HepG2 (cell line): ENCODE measurements at regions of chr9 and their contacts with region 1.

Region 1: DNA sequence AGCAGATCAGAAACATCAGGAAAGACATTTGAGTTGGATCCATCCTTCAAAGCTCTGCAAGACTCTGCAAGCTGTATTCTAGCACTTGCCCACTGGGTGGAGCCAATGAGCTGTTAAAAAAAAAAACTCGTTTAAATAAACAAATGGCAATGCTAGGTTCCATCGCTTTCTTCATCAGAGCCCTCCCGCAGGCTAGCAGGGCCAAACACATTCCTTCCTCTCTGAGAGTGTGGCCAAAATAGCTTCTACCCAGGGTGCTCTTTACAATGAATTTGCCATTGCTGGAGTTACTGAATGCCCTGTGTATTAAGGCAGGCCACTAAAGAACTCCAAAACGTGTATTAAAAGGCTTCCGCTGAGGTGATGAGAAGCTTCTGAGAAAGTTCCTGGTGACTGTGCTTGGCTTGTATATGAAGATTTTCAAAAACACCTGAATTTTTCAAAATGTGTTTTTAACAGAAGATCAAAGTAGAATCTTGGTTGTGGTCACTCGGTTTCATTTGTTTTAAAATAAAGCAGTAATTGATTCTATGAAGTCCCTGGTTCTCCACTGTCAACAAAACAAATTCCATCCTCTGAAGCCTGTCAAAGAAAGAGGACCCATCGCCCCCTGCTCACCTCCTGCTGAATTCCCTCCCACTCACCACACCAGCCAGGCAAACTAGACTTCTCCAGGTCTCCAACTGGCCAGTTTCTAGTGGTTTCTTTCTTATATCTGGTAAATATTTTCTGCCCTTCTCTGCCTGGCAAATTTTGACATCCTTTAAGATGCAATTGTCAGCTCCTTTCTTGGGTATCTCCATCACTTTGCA is 36.5 kb upstream of the EQTN start:
- DNase-seq: peak; percentile 57
- ATAC-seq: peak; percentile 87
- H3K4me3 ChIP-seq: no peak overlapping the region
- H3K27ac ChIP-seq: no peak overlapping the region
- H3K4me1 ChIP-seq: no peaks in the 10 kb centered on the region
- H3K27me3 ChIP-seq: peaks cover 0 to 15% of the 10 kb centered on the region in 2 experiments; a peak in 2 of 5 replicates
- CTCF ChIP-seq: peak; percentile 77
- EP300 ChIP-seq: no peak
- POLR2A ChIP-seq: no peak
- RAD21 ChIP-seq: peak; percentile 65

Region 2: GRCh38 chr9:27108981-27109541 is 224.4 kb before region 1 on chr9 and contains the start of gene TEK:
- CTCF ChIA-PET with region 1: no interaction called
- POLR2A ChIA-PET with region 1: no interaction called
- in situ Hi-C with region 1: no loop called
- intact Hi-C with region 1: no loop called
- DNase-seq: no peak
- ATAC-seq: no peak
- H3K4me3 ChIP-seq: no peak within 1 kb of the TSS
- H3K27ac ChIP-seq: no peak within 1 kb of the TSS
- H3K4me1 ChIP-seq: no peaks in the 10 kb centered on the region
- H3K27me3 ChIP-seq: 0 out of 5 replicates have a peak, but pooled peaks cover 1 to 2% of the 10 kb centered on the region in 2 experiments
- CTCF ChIP-seq: no peak
- EP300 ChIP-seq: no peak
- POLR2A ChIP-seq: no peak
- RAD21 ChIP-seq: no peak
- total RNA-seq, gene TEK: not detected in 2 replicates

Region 3: DNA sequence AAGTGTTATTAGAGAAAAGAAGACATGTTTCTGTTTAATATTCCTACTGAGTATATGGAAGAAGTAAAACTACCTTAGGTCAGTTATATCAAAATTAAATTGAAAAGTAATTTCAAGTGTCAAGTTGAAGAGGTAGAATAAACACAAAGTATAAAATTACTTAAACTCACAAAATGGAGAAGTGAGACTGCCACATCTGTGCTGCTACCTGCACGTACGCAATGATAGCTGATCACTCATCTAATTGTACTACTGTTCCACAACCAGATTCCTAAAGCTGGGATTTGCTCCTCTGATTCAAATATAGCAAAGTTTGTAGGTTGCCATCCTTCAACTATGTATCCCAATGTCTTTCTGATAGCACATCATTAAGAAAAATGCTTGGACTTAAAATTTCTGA is 61.3 kb before region 1 on chr9:
- CTCF ChIA-PET with region 1: no interaction called
- POLR2A ChIA-PET with region 1: no interaction called
- in situ Hi-C with region 1: no loop called
- intact Hi-C with region 1: no loop called
- DNase-seq: no peak
- ATAC-seq: no peak
- H3K4me3 ChIP-seq: no peak overlapping the region
- H3K27ac ChIP-seq: no peak overlapping the region
- H3K4me1 ChIP-seq: peaks cover 5% of the 10 kb centered on the region; the same call in 1 of the 2 replicates
- H3K27me3 ChIP-seq: no peaks in the 10 kb centered on the region
- CTCF ChIP-seq: no peak
- EP300 ChIP-seq: no peak
- POLR2A ChIP-seq: no peak
- RAD21 ChIP-seq: no peak

Region 4: GRCh38 chr9:27377147-27377807 is 43.8 kb after region 1 on chr9:
- CTCF ChIA-PET with region 1: no interaction called
- POLR2A ChIA-PET with region 1: no interaction called
- in situ Hi-C with region 1: no loop called
- intact Hi-C with region 1: no loop called
- DNase-seq: no peak
- ATAC-seq: no peak
- H3K4me3 ChIP-seq: no peak overlapping the region
- H3K27ac ChIP-seq: no peak overlapping the region
- H3K4me1 ChIP-seq: peaks cover 16% of the 10 kb centered on the region
- H3K27me3 ChIP-seq: peaks cover 0 to 5% of the 10 kb centered on the region in 2 experiments; a peak in 2 of 5 replicates
- CTCF ChIP-seq: no peak
- EP300 ChIP-seq: no peak
- POLR2A ChIP-seq: no peak
- RAD21 ChIP-seq: no peak

Region 5: DNA sequence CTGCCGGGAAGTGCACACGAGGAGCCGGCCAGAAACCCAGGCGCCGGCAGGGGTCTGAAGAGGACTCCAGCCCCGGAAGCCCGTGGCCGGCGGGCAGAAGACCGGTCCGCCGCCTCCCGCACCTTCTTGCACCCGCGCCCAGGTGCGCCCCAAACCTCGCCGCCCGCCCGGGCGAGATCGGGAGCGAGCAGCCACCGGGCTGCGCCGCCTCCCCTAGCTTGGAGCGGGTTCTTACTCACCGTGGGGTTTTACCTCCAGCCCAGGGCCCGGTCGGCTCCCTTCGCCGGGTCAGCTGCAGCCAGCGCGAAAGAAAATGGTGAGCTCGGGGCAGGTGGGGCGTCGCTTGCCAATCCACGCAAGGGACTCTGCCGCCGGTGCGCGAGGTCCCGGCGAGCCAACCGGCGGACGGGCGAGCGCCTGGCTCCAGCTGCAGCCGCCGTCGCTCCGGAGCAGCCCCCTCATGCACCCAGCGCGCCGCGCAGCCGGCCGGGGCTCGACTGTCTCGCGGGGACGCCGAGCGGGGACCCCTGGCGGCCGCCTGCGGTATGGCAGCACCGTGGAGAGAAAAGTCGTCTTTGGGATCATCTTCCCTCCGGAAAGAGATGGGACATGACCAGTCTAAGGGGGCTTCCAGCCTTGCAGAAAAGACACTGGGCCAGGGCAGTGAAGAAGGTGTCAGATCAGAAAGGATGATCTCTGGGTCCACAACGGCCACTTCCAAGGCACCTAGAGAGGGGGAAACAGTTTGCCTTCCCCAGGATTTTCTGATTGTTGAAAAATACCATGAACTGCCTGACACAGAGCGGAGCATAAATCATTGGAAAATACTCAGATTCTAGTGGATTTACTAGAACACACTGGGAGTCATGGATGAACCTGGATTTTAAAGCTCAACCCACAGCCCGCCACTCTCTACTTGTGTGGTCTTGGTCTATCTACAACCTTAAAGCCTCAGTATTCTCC is 196.2 kb after region 1 on chr9 and contains the start of gene MOB3B:
- CTCF ChIA-PET with region 1: interaction called, 46 read pairs
- POLR2A ChIA-PET with region 1: no interaction called
- in situ Hi-C with region 1: loop called (anchors 5 kb)
- intact Hi-C with region 1: loop called (anchors 1 kb)
- DNase-seq: peak; percentile 31
- ATAC-seq: peak; percentile 98
- H3K4me3 ChIP-seq: peak within 1 kb of the TSS; percentile 61 to 75 (median 61)
- H3K27ac ChIP-seq: no peak within 1 kb of the TSS
- H3K4me1 ChIP-seq: peaks cover 9% of the 10 kb centered on the region
- H3K27me3 ChIP-seq: peaks cover 7 to 26% of the 10 kb centered on the region in 2 experiments; a peak in 3 of 5 replicates
- CTCF ChIP-seq: peak; percentile 81
- EP300 ChIP-seq: no peak
- POLR2A ChIP-seq: no peak
- RAD21 ChIP-seq: peak; percentile 72
- total RNA-seq, gene MOB3B: 0.03 and 0.09 TPM in 2 replicates

Region 6: GRCh38 chr9:27548055-27548741 is 214.8 kb after region 1 on chr9:
- CTCF ChIA-PET with region 1: interaction called, 21 read pairs
- POLR2A ChIA-PET with region 1: no interaction called
- in situ Hi-C with region 1: no loop called
- intact Hi-C with region 1: loop called (anchors 1 kb)
- DNase-seq: no peak
- ATAC-seq: peak; percentile 64; the same call in 2 of the 3 replicates
- H3K4me3 ChIP-seq: no peak overlapping the region
- H3K27ac ChIP-seq: no peak overlapping the region
- H3K4me1 ChIP-seq: no peaks in the 10 kb centered on the region
- H3K27me3 ChIP-seq: no peaks in the 10 kb centered on the region
- CTCF ChIP-seq: peak; percentile 56
- EP300 ChIP-seq: no peak
- POLR2A ChIP-seq: no peak
- RAD21 ChIP-seq: no peak

Region 7: GRCh38 chr9:28073270-28073669 is 739.8 kb after region 1 on chr9:
- CTCF ChIA-PET with region 1: no interaction called
- POLR2A ChIA-PET with region 1: no interaction called
- in situ Hi-C with region 1: loop called (anchors 25 kb)
- intact Hi-C with region 1: loop called (anchors 1 kb)
- DNase-seq: peak; percentile 30
- ATAC-seq: peak; percentile 60
- H3K4me3 ChIP-seq: peak overlapping the region in 1 of 3 experiments; percentile 12; a peak in 1 of 6 replicates
- H3K27ac ChIP-seq: no peak overlapping the region
- H3K4me1 ChIP-seq: no peaks in the 10 kb centered on the region
- H3K27me3 ChIP-seq: no peaks in the 10 kb centered on the region
- CTCF ChIP-seq: peak; percentile 53
- EP300 ChIP-seq: no peak
- POLR2A ChIP-seq: no peak
- RAD21 ChIP-seq: peak; percentile 25; the same call in 1 of the 2 replicates